Mammary epithelial cell (primary cell): ENCODE measurements at regions of chr10 and their contacts with region 1.

Region 1: GRCh38 chr10:23253780-23254179 is 61.7 kb downstream of the PTF1A start:
- DNase-seq: no peak
- H3K4me3 ChIP-seq: no peak overlapping the region
- H3K27ac ChIP-seq: no peak overlapping the region
- H3K4me1 ChIP-seq: no peaks in the 10 kb centered on the region
- H3K27me3 ChIP-seq: peaks cover 3% of the 10 kb centered on the region
- CTCF ChIP-seq: no peak

Region 2: GRCh38 chr10:23171223-23171876 is 82.4 kb before region 1 on chr10:
- CTCF ChIA-PET with region 1: no interaction called
- dilution Hi-C with region 1: loop called (anchors 5 kb)
- in situ Hi-C with region 1: no loop called
- intact Hi-C with region 1: no loop called
- DNase-seq: peak; percentile 39
- H3K4me3 ChIP-seq: no peak overlapping the region
- H3K27ac ChIP-seq: no peak overlapping the region
- H3K4me1 ChIP-seq: no peaks in the 10 kb centered on the region
- H3K27me3 ChIP-seq: peaks cover 29% of the 10 kb centered on the region
- CTCF ChIP-seq: no peak

Region 3: GRCh38 chr10:23204773-23205172 is 49.0 kb before region 1 on chr10:
- CTCF ChIA-PET with region 1: no interaction called
- dilution Hi-C with region 1: loop called (anchors 5 kb)
- in situ Hi-C with region 1: no loop called
- intact Hi-C with region 1: no loop called
- DNase-seq: no peak
- H3K4me3 ChIP-seq: no peak overlapping the region
- H3K27ac ChIP-seq: no peak overlapping the region
- H3K4me1 ChIP-seq: no peaks in the 10 kb centered on the region
- H3K27me3 ChIP-seq: peaks cover 20% of the 10 kb centered on the region
- CTCF ChIP-seq: no peak